Activated CD4-positive, alpha-beta T cell treated with anti-CD3 and anti-CD28 coated beads for 36 hours (primary cell): ENCODE measurements at regions of chr11 and their contacts with region 1.

Region 1: DNA sequence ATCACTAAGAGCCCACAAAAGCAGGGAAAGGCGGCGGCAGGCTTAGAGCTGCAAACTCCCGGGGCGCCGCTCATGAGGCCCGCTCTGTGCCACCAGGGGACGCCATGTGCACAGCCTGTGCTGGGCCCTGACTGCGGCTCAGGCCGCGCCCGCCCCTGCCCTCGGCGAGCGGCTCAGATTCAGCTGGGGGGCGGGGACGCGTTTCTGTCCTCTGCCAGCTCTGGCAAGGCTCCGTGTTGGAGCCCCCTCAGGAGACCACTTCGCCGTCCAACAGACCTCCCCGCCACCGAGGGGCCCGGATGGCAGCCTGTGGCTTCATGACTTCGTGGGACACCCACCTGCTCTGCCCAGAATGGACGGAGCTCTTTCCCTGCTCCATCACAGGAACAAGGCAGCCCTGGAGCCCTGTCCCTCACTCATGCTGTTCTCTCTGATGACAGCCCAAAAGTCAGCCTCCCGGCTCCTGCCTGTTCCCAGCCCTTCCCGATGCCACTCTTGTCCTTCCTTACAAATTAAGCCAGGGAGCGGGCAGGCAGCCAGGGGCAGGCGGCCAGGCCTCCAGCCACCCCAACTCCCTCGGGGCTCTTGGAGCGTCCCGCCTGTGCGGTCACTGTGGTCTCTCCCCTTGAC is 69.1 kb downstream of the NAT10 start:
- DNase-seq: peak; percentile 92
- ATAC-seq: peak; percentile 99
- H3K4me3 Mint-ChIP-seq: peak overlapping the region; percentile 9
- H3K27ac Mint-ChIP-seq: no peak overlapping the region
- H3K4me1 Mint-ChIP-seq: peaks cover 11% of the 10 kb centered on the region
- H3K27me3 Mint-ChIP-seq: peaks cover 2% of the 10 kb centered on the region

Region 2: DNA sequence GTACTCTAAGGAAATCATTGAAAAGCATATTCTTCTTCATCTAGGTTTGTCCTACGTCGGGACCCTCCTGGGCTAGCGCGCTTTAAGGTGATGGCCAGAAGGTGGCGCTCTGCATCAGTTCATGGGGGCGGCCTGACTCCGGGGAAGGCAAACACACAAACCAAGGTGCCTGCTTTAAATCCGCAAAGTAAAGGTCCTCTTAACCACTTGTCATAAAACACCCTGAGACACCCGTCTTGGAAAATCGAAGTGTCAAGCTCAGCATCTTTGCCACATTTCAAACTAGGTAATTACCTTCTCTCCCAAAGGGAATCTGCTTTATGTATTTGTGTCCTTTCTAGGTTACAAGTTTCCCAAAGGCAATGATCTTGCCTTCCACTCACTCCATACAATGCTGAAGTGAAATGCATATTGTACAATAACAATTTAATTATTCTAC is 316.6 kb before region 1 on chr11:
- CTCF ChIA-PET with region 1: no interaction called
- POLR2A ChIA-PET with region 1: no interaction called
- intact Hi-C with region 1: loop called in 1 of 2 experiments (anchors 10 kb)
- DNase-seq: peak; percentile 88
- ATAC-seq: peak; percentile 88
- H3K4me3 Mint-ChIP-seq: no peak overlapping the region
- H3K27ac Mint-ChIP-seq: no peak overlapping the region
- H3K4me1 Mint-ChIP-seq: no peaks in the 10 kb centered on the region
- H3K27me3 Mint-ChIP-seq: peaks cover 32% of the 10 kb centered on the region

Region 3: GRCh38 chr11:34185926-34186841 is 11.7 kb after region 1 on chr11:
- CTCF ChIA-PET with region 1: interaction called, 16 read pairs
- POLR2A ChIA-PET with region 1: no interaction called
- intact Hi-C with region 1: no loop called
- DNase-seq: no peak
- ATAC-seq: no peak
- H3K4me3 Mint-ChIP-seq: no peak overlapping the region
- H3K27ac Mint-ChIP-seq: no peak overlapping the region
- H3K4me1 Mint-ChIP-seq: peaks cover 2% of the 10 kb centered on the region
- H3K27me3 Mint-ChIP-seq: no peaks in the 10 kb centered on the region

Region 4: DNA sequence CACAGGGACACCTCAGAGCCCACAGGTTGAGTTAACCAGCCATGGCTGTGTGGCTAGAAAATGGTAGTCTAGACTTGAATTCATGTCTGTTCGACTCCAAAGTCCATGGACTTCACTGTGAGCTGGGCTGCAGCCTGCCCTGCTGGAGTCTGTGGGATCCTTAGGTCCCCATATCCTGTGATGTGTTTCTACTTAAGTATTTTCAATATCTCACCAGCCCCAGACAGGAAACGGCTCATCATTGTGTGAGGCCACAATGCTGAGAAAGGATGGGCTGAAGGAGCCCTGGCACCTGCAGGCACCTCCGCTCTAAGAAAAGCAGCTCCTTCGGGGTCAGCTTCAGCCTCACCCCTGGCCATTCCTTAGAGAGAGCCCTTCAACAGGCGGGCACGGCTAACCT is 24.0 kb after region 1 on chr11:
- CTCF ChIA-PET with region 1: no interaction called
- POLR2A ChIA-PET with region 1: no interaction called
- intact Hi-C with region 1: no loop called
- DNase-seq: no peak
- ATAC-seq: peak; percentile 58
- H3K4me3 Mint-ChIP-seq: no peak overlapping the region
- H3K27ac Mint-ChIP-seq: no peak overlapping the region
- H3K4me1 Mint-ChIP-seq: peaks cover 19% of the 10 kb centered on the region
- H3K27me3 Mint-ChIP-seq: no peaks in the 10 kb centered on the region

Region 5: GRCh38 chr11:34234086-34234740 is 59.7 kb after region 1 on chr11:
- CTCF ChIA-PET with region 1: interaction called, 11 read pairs
- POLR2A ChIA-PET with region 1: no interaction called
- intact Hi-C with region 1: loop called (anchors 2 kb)
- DNase-seq: peak; percentile 89
- ATAC-seq: peak; percentile 93
- H3K4me3 Mint-ChIP-seq: peak overlapping the region; percentile 16
- H3K27ac Mint-ChIP-seq: peak overlapping the region; percentile 72
- H3K4me1 Mint-ChIP-seq: peaks cover 44% of the 10 kb centered on the region
- H3K27me3 Mint-ChIP-seq: peaks cover 3% of the 10 kb centered on the region

Region 6: DNA sequence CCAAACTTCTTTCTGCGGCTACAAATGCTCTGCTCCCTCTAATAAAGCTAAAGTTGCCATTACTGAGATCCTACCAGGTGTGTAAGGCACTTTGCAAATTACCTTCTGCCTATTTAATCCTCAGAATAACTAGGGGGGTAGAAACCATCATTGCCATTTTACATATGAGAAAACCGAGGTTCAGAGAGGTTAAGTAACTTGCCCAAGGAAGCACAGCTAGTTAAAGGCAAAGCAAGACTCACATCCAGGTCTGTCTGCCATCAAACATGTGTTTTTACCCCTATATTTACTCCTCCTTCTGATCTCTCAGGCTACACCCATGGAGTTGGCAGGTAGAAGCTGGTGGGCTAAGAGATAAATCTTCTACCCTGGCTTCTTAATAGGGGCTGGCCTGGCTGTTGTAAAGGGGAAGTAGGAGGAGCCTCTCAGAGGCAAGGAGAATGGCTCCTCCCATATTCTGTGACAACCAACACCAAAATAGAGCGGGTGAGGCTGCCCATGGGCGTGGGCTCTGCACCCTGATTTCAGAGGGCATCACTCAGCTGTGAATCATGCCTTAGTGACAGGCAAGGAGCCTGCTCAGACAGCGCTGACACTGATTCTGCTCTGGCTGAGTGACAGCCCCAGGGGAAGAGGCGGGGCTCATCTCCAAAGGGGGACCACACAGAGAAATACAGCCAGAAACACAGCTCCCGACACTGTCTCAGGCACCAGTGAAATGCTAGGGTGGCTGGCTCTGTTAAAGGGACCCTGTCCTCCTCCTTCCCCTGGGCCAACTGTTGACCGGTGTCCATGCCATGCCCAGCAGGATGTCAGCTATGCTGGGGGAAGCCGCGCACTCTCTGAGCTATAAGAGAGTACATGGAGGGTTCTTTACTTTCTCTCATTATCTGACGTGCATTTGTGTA is 76.5 kb after region 1 on chr11:
- CTCF ChIA-PET with region 1: interaction called, 12 read pairs
- POLR2A ChIA-PET with region 1: no interaction called
- intact Hi-C with region 1: loop called in 1 of 2 experiments (anchors 2 kb)
- DNase-seq: peak; percentile 86
- ATAC-seq: peak; percentile 98
- H3K4me3 Mint-ChIP-seq: no peak overlapping the region
- H3K27ac Mint-ChIP-seq: no peak overlapping the region
- H3K4me1 Mint-ChIP-seq: peaks cover 60% of the 10 kb centered on the region
- H3K27me3 Mint-ChIP-seq: peaks cover 20% of the 10 kb centered on the region

Region 7: DNA sequence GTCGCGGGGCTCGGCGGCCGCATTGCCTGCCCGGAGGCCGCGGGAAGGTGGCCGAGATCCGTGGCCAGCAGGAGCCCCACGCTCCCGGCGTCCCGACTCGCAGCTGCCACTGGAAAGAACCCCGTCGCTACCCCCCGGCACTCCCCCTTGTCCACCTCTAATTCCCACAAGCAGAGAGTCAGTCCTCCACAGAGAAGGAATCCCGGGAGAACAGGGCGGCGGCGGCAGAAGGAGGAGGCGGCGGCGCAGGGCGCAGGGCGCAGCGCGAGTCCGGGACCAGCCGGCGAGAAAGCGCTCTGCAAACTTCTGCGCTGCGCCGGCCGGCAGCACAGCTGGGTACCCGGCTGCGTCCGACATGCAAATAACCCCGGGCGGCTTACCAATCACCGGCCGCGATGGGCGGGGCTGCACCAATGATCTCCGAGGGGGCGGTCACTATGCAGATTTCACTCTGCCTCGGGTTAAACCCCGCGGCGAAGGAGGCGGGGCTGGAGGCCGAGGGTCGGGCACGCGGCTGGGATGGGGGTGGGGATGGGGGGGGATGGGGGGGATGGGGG is 183.3 kb after region 1 on chr11 and contains the start of gene ABTB2:
- CTCF ChIA-PET with region 1: interaction called, 70 read pairs
- POLR2A ChIA-PET with region 1: interaction called, 3 read pairs
- intact Hi-C with region 1: loop called (anchors 1 kb)
- DNase-seq: peak; percentile 99
- ATAC-seq: peak; percentile 95
- H3K4me3 Mint-ChIP-seq: peak within 1 kb of the TSS; percentile 78
- H3K27ac Mint-ChIP-seq: peak within 1 kb of the TSS; percentile 67
- H3K4me1 Mint-ChIP-seq: peaks cover 28% of the 10 kb centered on the region
- H3K27me3 Mint-ChIP-seq: peaks cover 36% of the 10 kb centered on the region
- total RNA-seq, gene ABTB2: 1.2 TPM

Region 8: GRCh38 chr11:34468209-34468841 is 293.8 kb after region 1 on chr11:
- CTCF ChIA-PET with region 1: interaction called, 7 read pairs
- POLR2A ChIA-PET with region 1: no interaction called
- intact Hi-C with region 1: loop called (anchors 1 to 10 kb)
- DNase-seq: peak; percentile 68
- ATAC-seq: peak; percentile 66
- H3K4me3 Mint-ChIP-seq: no peak overlapping the region
- H3K27ac Mint-ChIP-seq: no peak overlapping the region
- H3K4me1 Mint-ChIP-seq: peaks cover 4% of the 10 kb centered on the region
- H3K27me3 Mint-ChIP-seq: no peaks in the 10 kb centered on the region

Region 9: DNA sequence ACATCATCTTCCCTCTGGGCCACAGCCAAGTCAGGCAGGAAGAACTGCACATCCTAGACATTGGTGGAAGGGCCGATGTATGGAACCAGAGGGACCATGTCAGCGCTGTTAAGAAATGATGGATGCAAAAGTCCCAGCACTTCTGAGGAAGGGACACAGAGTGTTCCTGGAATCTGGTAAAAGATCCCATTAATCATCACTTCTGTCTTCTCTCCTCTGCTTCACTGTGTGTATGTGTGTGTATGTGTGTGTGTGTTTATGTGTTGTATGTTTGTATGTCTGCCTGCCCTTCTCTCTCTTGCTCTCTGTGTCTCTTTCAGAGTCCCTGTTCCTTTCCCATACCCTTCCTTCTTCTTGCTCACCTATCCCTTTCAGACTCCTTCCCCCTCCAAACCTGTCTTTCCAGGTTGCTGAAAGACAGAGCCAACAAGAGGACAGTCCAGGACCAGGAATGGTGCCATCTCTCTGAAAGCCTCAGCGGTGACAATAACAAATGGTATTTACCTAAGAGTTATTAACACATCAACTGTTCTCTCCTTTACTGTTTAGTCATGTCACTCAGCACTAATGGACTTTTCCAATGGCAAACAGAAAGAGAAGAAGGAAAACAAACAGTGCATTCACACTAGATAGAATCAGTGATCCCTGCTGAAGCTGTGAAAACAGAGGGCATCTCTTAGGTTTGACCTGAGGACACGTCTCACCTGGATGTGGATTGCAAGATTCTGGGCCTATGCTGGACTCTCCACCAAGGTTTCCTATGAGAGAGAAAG is 493.5 kb after region 1 on chr11:
- CTCF ChIA-PET with region 1: no interaction called
- POLR2A ChIA-PET with region 1: no interaction called
- intact Hi-C with region 1: no loop called
- DNase-seq: no peak
- ATAC-seq: no peak
- H3K4me3 Mint-ChIP-seq: no peak overlapping the region
- H3K27ac Mint-ChIP-seq: no peak overlapping the region
- H3K4me1 Mint-ChIP-seq: no peaks in the 10 kb centered on the region
- H3K27me3 Mint-ChIP-seq: peaks cover 32% of the 10 kb centered on the region